CD14-positive monocyte (primary cell): ENCODE measurements at regions of chr15 and their contacts with region 1.

Region 1: DNA sequence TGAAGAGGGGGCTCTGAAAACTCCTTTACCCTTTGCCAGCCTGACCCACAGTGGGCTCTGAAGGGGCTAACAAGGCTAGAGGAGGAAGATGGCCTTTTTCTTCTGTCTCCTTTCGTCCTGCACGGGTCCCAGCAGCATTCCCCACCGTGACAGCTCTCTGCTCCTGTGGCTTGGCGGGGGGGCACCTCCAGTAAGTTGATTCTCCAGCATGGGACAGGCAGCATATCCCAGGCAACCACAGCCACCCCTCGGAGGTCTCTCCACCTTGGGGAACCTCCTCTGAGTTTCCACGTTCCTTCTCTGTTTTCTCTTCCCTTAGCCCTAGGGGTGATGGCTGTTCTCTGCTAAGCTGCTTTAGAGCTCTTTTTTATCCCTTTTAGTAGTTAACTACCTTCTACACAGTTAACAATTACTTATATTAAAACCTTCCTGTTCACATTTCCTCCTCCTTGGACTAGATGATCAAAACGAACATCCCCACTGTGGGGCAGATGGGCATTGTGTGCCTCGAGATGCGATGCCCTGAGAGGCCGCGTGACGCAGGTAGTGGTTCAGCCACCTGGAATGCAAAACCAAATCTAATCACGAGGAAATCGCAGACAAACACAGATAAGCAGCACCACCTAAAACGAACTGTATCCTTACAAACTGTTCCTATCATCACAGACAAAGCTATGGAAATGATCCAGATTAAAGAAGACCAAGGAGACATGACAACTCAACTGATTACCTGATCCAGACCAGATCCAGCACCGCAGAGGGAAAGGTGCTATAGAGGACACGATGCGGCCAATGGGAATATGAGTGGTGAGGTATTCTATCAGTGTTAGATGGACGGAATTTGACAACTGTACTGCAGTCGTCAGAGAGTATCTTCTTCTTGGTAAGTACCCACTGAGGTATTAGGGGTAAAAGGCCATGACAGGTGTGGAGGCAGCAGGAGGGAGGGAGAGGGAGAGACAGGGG is 27.7 kb downstream of the TSPAN3 start:
- DNase-seq: no peak
- H3K4me3 ChIP-seq: no peak overlapping the region
- H3K4me3 Mint-ChIP-seq: no peak overlapping the region
- H3K27ac ChIP-seq: peak overlapping the region in 1 of 2 donors; percentile 37
- H3K27ac Mint-ChIP-seq: peak overlapping the region in 3 of 7 donors; percentile 52 to 81 (median 60)
- H3K4me1 ChIP-seq: no peaks in the 10 kb centered on the region
- H3K4me1 Mint-ChIP-seq: peaks cover 10% of the 10 kb centered on the region
- H3K27me3 ChIP-seq: no peaks in the 10 kb centered on the region
- H3K27me3 Mint-ChIP-seq: peaks cover 0 to 1% (median 0%) of the 10 kb centered on the region in 3 donors
- CTCF ChIP-seq: peak; percentile 9

Region 2: GRCh38 chr15:77053709-77054108 is 10.5 kb after region 1 on chr15:
- intact Hi-C with region 1: loop called in 1 of 2 experiments (anchors 1 kb)
- DNase-seq: peak in 1 of 3 donors; percentile 45
- H3K4me3 ChIP-seq: no peak overlapping the region
- H3K4me3 Mint-ChIP-seq: no peak overlapping the region
- H3K27ac ChIP-seq: no peak overlapping the region
- H3K27ac Mint-ChIP-seq: peak overlapping the region in 2 of 7 donors; percentile 1 to 28
- H3K4me1 ChIP-seq: no peaks in the 10 kb centered on the region
- H3K4me1 Mint-ChIP-seq: peaks cover 14% of the 10 kb centered on the region
- H3K27me3 ChIP-seq: no peaks in the 10 kb centered on the region
- H3K27me3 Mint-ChIP-seq: no peaks in the 10 kb centered on the region
- CTCF ChIP-seq: no peak